Activated CD4-positive, alpha-beta T cell treated with anti-CD3 and anti-CD28 coated beads, Interleukin-2, amount 10 ng/mL, durations not matched to agents 24 days and 14 days (primary cell): ENCODE measurements at regions of chr18 and their contacts with region 1.

Region 1: DNA sequence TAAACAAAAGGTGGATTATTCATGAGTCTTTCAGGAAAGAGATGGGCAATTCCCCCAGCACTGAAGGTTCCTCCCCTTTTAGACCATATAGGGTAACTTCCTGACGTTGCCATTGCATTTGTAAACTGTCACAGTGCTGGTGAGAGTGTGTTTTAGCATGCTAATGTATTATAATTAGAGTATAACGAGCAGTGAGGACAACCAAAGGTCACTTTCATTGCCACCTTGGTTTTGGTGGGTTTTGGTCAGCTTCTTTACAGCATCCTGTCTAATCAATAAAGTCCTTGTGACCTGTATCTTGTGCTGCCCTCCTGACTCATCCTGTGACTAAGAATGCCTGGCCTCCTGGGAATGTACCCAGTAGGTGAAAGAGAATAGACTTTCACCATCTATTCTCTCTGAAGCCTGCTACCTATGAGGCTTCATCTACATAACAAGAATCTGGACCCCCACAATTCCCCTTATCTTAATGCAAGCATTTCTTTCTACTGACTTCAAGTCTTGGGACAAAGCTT is 148.7 kb downstream of the CABLES1 start:
- DNase-seq: no peak
- H3K4me3 Mint-ChIP-seq: no peak overlapping the region
- H3K27ac Mint-ChIP-seq: peak overlapping the region; percentile 74
- H3K4me1 Mint-ChIP-seq: peaks cover 20% of the 10 kb centered on the region
- H3K27me3 Mint-ChIP-seq: no peaks in the 10 kb centered on the region

Region 2: DNA sequence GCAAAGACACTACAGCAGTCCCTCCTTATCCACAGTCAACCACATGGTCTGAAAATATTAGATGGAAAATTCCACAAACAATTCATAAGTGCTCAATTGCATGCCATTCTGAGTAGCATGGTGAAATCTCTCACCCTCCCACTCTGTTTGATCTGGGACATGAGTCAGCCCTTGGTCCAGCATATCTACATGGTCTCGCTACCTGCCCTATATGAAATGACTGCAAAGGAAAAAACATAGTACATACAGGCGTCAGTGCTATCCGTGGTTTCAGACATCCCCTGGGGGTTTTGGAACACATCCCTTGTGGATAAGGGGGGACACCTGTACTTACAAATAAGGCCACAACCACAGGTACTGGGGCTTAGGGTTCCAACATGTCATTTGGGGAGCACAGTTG is 74.9 kb before region 1 on chr18:
- intact Hi-C with region 1: loop called (anchors 1 kb)
- DNase-seq: no peak
- H3K4me3 Mint-ChIP-seq: no peak overlapping the region
- H3K27ac Mint-ChIP-seq: peak overlapping the region; percentile 84
- H3K4me1 Mint-ChIP-seq: peaks cover 11% of the 10 kb centered on the region
- H3K27me3 Mint-ChIP-seq: no peaks in the 10 kb centered on the region

Region 3: DNA sequence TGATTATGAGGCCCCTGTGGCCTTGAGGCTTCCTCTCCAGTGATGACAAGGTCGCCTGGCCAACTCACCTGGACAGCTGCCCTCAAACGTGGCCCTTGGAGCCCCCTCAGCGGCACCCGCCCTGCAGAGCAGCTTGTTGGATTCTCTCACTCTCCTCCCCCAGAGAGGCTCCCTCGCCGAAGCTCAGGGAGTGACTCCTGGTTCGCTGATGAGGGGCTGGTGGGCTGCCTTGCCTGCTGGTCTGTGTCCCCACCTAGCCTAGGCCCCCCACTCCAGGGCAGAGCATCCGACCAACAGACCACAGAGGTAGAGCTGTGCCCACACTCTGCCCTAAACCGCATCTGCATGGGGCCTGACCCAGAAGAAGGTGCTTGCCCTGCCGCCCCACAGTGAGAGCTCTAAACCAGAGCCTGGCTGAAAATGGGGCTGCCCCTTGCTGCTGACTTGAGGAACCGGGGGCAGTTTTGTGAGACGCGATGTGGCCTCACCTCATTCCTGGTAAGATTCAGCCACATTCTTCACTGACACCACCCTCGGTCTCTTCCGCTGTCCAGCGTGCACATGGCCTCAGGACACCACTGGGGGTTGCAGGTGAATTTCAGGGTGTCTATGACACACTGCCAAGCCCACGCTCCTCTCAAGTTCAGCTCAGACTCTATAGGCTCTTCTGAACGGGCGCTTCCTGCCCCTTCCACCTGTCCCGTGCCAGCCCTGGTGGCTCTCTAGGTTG is 17.1 kb before region 1 on chr18:
- intact Hi-C with region 1: no loop called
- DNase-seq: no peak
- H3K4me3 Mint-ChIP-seq: no peak overlapping the region
- H3K27ac Mint-ChIP-seq: no peak overlapping the region
- H3K4me1 Mint-ChIP-seq: peaks cover 16% of the 10 kb centered on the region
- H3K27me3 Mint-ChIP-seq: no peaks in the 10 kb centered on the region